ENCODE measurements at regions of chr2 and their contacts with region 1.

Region 1: GRCh38 chr2:98385050-98385699 is 38.9 kb downstream of the CNGA3 start:
- DNase-seq: peak; percentile 77
- H3K4me3 Mint-ChIP-seq: no peak overlapping the region
- H3K27ac Mint-ChIP-seq: no peak overlapping the region
- H3K4me1 Mint-ChIP-seq: peaks cover 6% of the 10 kb centered on the region
- H3K27me3 Mint-ChIP-seq: peaks cover 85% of the 10 kb centered on the region
- CTCF ChIP-seq: peak; percentile 88

Region 2: GRCh38 chr2:97697252-97698235 is 687.6 kb before region 1 on chr2:
- CTCF ChIA-PET with region 1: interaction called, 8 read pairs
- intact Hi-C with region 1: loop called (anchors 1 kb)
- DNase-seq: peak; percentile 90
- H3K4me3 Mint-ChIP-seq: no peak overlapping the region
- H3K27ac Mint-ChIP-seq: no peak overlapping the region
- H3K4me1 Mint-ChIP-seq: peaks cover 8% of the 10 kb centered on the region
- H3K27me3 Mint-ChIP-seq: peaks cover 38% of the 10 kb centered on the region
- CTCF ChIP-seq: peak; percentile 87

Region 3: GRCh38 chr2:97948926-97949325 is 436.2 kb before region 1 on chr2:
- CTCF ChIA-PET with region 1: no interaction called
- intact Hi-C with region 1: no loop called
- DNase-seq: no peak
- H3K4me3 Mint-ChIP-seq: no peak overlapping the region
- H3K27ac Mint-ChIP-seq: no peak overlapping the region
- H3K4me1 Mint-ChIP-seq: peaks cover 18% of the 10 kb centered on the region
- H3K27me3 Mint-ChIP-seq: no peaks in the 10 kb centered on the region
- CTCF ChIP-seq: no peak

Region 4: GRCh38 chr2:98188351-98189049 is 196.7 kb before region 1 on chr2:
- CTCF ChIA-PET with region 1: interaction called, 4 read pairs
- intact Hi-C with region 1: loop called (anchors 10 kb)
- DNase-seq: peak; percentile 39
- H3K4me3 Mint-ChIP-seq: no peak overlapping the region
- H3K27ac Mint-ChIP-seq: no peak overlapping the region
- H3K4me1 Mint-ChIP-seq: no peaks in the 10 kb centered on the region
- H3K27me3 Mint-ChIP-seq: no peaks in the 10 kb centered on the region
- CTCF ChIP-seq: no peak

Region 5: GRCh38 chr2:98280376-98281102 is 104.6 kb before region 1 on chr2:
- CTCF ChIA-PET with region 1: no interaction called
- intact Hi-C with region 1: loop called (anchors 10 kb)
- DNase-seq: peak; percentile 39
- H3K4me3 Mint-ChIP-seq: peak overlapping the region; percentile 22
- H3K27ac Mint-ChIP-seq: no peak overlapping the region
- H3K4me1 Mint-ChIP-seq: peaks cover 18% of the 10 kb centered on the region
- H3K27me3 Mint-ChIP-seq: peaks cover 40% of the 10 kb centered on the region
- CTCF ChIP-seq: no peak

Region 6: DNA sequence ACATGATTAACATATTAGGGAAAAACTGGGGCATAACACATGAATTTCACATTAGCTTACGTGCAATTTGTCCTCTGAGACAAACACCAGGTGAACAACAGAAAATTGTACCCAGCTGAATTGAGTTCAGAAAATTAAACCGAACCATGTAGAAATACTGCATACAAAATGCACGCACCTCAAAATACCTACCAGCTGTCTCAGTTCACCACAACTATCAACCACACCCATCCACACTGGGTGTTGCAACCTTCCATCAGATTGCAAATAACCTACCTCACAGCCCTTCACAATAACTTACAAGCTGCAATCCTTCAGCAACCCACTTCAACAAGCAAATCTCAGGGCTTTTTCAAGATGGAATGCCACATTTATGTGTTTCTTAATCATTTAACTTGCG is 279.2 kb after region 1 on chr2:
- CTCF ChIA-PET with region 1: no interaction called
- intact Hi-C with region 1: no loop called
- DNase-seq: peak; percentile 36
- H3K4me3 Mint-ChIP-seq: no peak overlapping the region
- H3K27ac Mint-ChIP-seq: no peak overlapping the region
- H3K4me1 Mint-ChIP-seq: no peaks in the 10 kb centered on the region
- H3K27me3 Mint-ChIP-seq: no peaks in the 10 kb centered on the region
- CTCF ChIP-seq: no peak

Measured in Calu3 (cell line).